ENCODE measurements at regions of chr12 and their contacts with region 1.

Region 1: GRCh38 chr12:48924617-48925303 is 532 bp downstream of the FKBP11 start:
- DNase-seq: peak; percentile 82
- H3K4me3 Mint-ChIP-seq: peak overlapping the region; percentile 88
- H3K27ac Mint-ChIP-seq: peak overlapping the region; percentile 94
- H3K4me1 Mint-ChIP-seq: peaks cover 47% of the 10 kb centered on the region
- H3K27me3 Mint-ChIP-seq: no peaks in the 10 kb centered on the region

Region 2: DNA sequence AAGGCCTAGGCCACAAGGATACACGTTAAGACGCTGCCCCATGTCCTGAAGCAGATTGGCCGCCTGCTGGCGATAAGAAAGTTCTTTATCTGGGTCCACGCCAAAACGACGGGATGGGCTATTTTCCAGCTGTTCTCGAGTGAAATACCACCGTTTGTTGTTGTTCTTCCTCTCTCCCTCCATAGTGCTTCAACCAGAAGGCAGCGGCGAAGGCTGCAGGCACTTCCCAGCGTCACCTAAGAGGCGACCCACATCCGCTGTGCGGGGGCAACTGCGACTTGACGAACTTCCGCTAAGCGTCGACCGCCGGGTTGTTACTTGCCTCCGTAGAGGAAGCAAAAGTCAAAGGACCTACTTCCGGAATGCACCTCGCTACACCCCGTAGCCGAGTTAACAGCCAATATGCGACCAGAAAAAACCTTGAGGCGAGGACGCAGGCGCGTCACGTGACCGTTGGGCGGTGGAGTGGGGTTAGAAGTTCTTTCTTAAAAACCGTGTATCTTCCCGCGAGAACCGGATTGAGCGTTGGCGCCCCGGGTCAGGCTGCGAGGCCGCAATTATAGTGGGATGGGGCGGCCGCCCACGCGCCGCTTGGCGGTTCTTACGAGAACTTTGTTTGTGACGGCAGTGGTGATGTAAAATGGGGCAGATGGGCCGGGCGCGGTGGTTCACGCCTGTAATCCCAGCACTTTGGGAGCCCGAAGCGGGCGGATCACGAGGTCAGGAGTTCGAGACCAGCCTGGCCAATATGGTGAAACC is 208.1 kb before region 1 on chr12 and contains the start of gene CCNT1:
- CTCF ChIA-PET with region 1: no interaction called
- POLR2A ChIA-PET with region 1: no interaction called
- intact Hi-C with region 1: no loop called
- DNase-seq: peak; percentile 100
- H3K4me3 Mint-ChIP-seq: peak within 1 kb of the TSS; percentile 98
- H3K27ac Mint-ChIP-seq: peak within 1 kb of the TSS; percentile 99
- H3K4me1 Mint-ChIP-seq: peaks cover 39% of the 10 kb centered on the region
- H3K27me3 Mint-ChIP-seq: no peaks in the 10 kb centered on the region
- total RNA-seq, gene CCNT1: 66.2 to 73.3 TPM

Region 3: DNA sequence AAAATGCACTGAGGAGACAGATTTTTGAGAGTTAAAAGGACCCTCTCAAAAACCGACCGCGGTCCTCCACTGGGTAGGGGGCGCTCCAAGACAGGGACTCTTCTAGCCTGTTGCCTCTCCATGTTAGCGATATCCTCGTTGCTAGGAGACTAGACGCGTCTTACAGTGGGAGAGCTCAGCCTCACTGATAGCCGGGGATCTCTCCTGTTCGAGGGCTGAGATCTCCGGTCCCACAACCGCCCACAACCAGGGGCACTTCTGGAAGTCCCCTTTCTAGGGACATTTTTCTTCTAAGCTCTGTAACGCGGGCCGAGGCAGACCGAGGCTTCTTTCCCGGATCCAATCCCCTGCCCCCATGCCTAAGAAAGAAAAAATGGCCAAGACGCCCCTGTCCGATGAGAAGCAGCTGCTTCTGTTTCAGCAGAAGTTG is 20.8 kb before region 1 on chr12:
- CTCF ChIA-PET with region 1: interaction called, 58 read pairs
- POLR2A ChIA-PET with region 1: interaction called, 10 read pairs
- intact Hi-C with region 1: no loop called
- DNase-seq: peak; percentile 89
- H3K4me3 Mint-ChIP-seq: peak overlapping the region; percentile 70
- H3K27ac Mint-ChIP-seq: no peak overlapping the region
- H3K4me1 Mint-ChIP-seq: peaks cover 2% of the 10 kb centered on the region
- H3K27me3 Mint-ChIP-seq: no peaks in the 10 kb centered on the region

Measured in activated CD4-positive, alpha-beta memory T cell treated with anti-CD3 and anti-CD28 coated beads for 36 hours (primary cell).